ENCODE measurements at regions of chr2 and their contacts with region 1.

Region 1: GRCh38 chr2:120066800-120067547 is 54.1 kb downstream of the EPB41L5 start:
- DNase-seq: peak; percentile 80
- ATAC-seq: peak; percentile 98
- H3K4me3 ChIP-seq: peak overlapping the region; percentile 46
- H3K27ac ChIP-seq: peak overlapping the region; percentile 46
- H3K4me1 ChIP-seq: peaks cover 17% of the 10 kb centered on the region
- H3K27me3 ChIP-seq: no peaks in the 10 kb centered on the region
- CTCF ChIP-seq: no peak

Region 2: DNA sequence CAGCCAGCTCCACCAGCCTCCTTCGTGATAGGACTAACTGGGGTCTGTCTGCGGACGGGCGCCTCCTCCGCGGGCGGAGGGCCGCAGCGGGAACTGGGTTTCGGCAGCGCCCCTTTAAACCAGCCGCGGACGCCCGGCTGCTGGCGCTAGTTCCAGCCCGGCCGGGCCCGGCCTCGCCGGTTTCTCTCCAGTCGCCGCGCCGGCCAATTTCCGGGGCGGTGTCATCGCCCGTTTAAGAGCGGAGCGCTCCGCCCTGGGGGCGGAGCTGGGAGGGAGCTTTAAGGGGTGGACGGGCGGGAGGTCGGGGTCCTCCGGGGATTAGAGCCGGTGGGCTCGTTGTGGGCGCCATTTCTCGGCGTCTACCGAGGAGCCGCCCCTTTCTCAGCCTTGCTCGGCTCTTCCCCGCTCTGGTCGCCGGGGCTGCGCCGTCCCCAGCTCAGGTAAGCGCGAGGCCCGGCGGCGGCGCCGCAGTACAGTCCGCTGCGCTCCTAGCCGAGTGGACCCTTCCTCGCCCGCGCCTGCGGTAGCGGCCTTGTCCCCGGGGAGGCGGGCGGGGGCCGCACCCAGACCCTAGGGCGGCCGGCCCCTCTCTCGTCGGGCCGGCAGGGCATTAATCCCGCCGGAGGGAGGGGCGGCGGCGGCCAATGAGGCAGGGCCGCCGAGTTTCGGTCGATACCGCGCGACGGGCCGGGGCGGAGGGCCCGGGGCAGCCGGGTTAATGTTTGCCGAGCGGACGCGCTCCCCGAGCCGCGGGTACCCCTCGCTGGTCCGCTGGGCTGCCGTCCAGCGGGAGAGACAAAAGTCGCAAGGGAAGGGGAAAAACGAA is 54.0 kb before region 1 on chr2 and contains the start of gene EPB41L5:
- CTCF ChIA-PET with region 1: no interaction called
- POLR2A ChIA-PET with region 1: no interaction called
- intact Hi-C with region 1: loop called (anchors 10 kb)
- DNase-seq: peak; percentile 96
- ATAC-seq: peak; percentile 91
- H3K4me3 ChIP-seq: peak within 1 kb of the TSS; percentile 80
- H3K27ac ChIP-seq: peak within 1 kb of the TSS; percentile 48
- H3K4me1 ChIP-seq: peaks cover 17% of the 10 kb centered on the region
- H3K27me3 ChIP-seq: no peaks in the 10 kb centered on the region
- CTCF ChIP-seq: 0 out of 2 replicates have a peak, but pooled peaks have one; percentile 8
- total RNA-seq, gene EPB41L5: 11.7 and 14.0 TPM in 2 replicates